ENCODE measurements at regions of chr3 and their contacts with region 1.

Region 1: DNA sequence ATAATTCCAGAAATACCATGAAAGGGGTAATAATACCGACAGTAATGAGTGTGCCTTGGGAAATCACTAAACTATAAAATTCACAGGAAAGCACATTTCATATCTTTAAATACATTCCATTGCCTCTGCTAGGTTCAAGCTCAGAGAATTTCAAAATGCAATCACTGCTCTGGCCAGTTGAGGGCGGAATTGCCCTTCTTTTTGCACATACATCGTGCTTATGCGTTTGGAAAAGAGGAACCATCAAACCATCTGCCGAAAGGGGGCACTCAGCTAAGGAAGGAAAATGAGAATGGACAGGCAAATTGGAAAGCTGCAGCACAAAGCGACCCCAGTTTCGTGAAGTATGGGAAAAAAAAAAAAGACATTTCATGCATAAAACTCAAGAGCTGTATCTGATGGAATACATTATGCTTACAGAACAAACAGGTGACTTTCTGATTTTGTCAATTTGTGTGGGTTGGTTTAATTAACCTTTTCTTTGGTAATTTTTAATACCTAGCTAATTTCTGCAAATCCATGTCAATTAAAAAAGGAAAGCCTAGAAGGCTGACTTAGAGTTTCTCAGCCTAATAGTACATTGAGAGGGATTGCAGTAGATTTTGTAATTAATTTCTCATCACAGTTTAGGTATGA is 61.4 kb downstream of the TUSC7 start:
- DNase-seq: peak in 4 of 5 donors; percentile 18 to 45 (median 30)
- ATAC-seq: peak in 2 of 4 donors; percentile 69 to 76
- H3K4me3 ChIP-seq: no peak overlapping the region
- H3K27ac ChIP-seq: no peak overlapping the region
- H3K4me1 ChIP-seq: no peaks in the 10 kb centered on the region
- H3K27me3 ChIP-seq: peaks cover 0 to 3% (median 0%) of the 10 kb centered on the region in 9 donors
- CTCF ChIP-seq: peak; percentile 52 to 85 (median 72)
- POLR2A ChIP-seq: no peak

Region 2: DNA sequence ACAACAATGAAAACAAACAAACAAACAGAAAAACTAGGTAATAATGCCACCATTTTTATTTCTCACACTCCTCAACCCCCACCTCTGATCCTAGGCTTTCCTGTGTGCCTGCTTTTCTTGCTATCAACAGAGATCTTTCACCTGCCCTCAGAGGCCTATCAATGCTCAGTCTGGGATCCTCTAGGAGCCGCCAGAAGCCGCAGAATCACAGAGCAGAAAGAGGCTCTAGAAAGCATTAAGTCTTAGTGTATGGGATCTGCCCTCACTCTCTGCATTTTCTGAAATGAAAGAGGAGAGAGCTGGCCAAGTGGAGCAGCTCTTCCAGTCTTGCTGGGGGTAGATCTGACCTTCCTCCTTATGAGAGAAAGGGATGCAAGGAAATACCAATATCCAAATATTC is 245.4 kb after region 1 on chr3:
- intact Hi-C with region 1: no loop called
- DNase-seq: no peak
- ATAC-seq: no peak
- H3K4me3 ChIP-seq: no peak overlapping the region
- H3K27ac ChIP-seq: no peak overlapping the region
- H3K4me1 ChIP-seq: no peaks in the 10 kb centered on the region
- H3K27me3 ChIP-seq: peaks cover 0 to 15% (median 0%) of the 10 kb centered on the region in 9 donors
- CTCF ChIP-seq: no peak
- POLR2A ChIP-seq: no peak

Region 3: GRCh38 chr3:117063930-117064329 is 293.0 kb after region 1 on chr3:
- intact Hi-C with region 1: no loop called
- DNase-seq: no peak
- ATAC-seq: peak in 2 of 4 donors; percentile 59 to 75
- H3K4me3 ChIP-seq: no peak overlapping the region
- H3K27ac ChIP-seq: no peak overlapping the region
- H3K4me1 ChIP-seq: peaks cover 0 to 21% (median 0%) of the 10 kb centered on the region in 12 donors
- H3K27me3 ChIP-seq: no peaks in the 10 kb centered on the region
- CTCF ChIP-seq: no peak
- POLR2A ChIP-seq: no peak

Region 4: DNA sequence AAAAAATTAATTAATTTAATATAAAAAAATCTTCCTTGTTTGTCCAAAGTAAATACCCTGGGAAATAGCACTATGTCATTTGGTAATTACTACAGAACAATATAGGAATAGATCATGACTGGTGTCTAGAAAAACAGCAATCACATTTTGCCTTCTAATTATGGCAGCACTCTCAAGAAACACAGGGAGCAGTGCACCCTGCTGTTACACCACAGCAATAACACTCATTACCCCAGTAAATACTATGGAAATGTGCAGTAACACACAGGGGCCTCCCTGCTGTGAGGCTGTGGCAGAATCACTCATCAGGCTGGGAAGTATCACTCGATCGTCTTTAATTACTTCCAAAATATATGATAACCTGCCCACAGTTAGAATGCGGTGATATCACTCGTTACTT is 584.6 kb after region 1 on chr3:
- intact Hi-C with region 1: loop called in 1 of 10 experiments (anchors 5 kb)
- DNase-seq: no peak
- ATAC-seq: no peak
- H3K4me3 ChIP-seq: no peak overlapping the region
- H3K27ac ChIP-seq: no peak overlapping the region
- H3K4me1 ChIP-seq: no peaks in the 10 kb centered on the region
- H3K27me3 ChIP-seq: no peaks in the 10 kb centered on the region
- CTCF ChIP-seq: peak in 8 of 12 donors; percentile 11 to 39 (median 26)
- POLR2A ChIP-seq: no peak

Region 5: GRCh38 chr3:117719316-117719926 is 948.5 kb after region 1 on chr3:
- intact Hi-C with region 1: loop called in 5 of 10 experiments (anchors 2 to 10 kb)
- DNase-seq: no peak
- ATAC-seq: no peak
- H3K4me3 ChIP-seq: no peak overlapping the region
- H3K27ac ChIP-seq: no peak overlapping the region
- H3K4me1 ChIP-seq: no peaks in the 10 kb centered on the region
- H3K27me3 ChIP-seq: peaks cover 0 to 5% (median 0%) of the 10 kb centered on the region in 9 donors
- CTCF ChIP-seq: peak; percentile 39 to 74 (median 64)
- POLR2A ChIP-seq: no peak

Region 6: GRCh38 chr3:117997201-117998049 is 1226.5 kb after region 1 on chr3:
- intact Hi-C with region 1: loop called in 1 of 10 experiments (anchors 5 kb)
- DNase-seq: peak; percentile 49 to 78 (median 54)
- ATAC-seq: peak; percentile 50 to 95 (median 90)
- H3K4me3 ChIP-seq: peak overlapping the region in 11 of 12 donors; percentile 14 to 56 (median 44)
- H3K27ac ChIP-seq: no peak overlapping the region
- H3K4me1 ChIP-seq: peaks cover 0 to 12% (median 5%) of the 10 kb centered on the region in 12 donors
- H3K27me3 ChIP-seq: peaks cover 0 to 47% (median 22%) of the 10 kb centered on the region in 9 donors
- CTCF ChIP-seq: peak; percentile 64 to 85 (median 72)
- POLR2A ChIP-seq: no peak

Measured in heart left ventricle (tissue), 16 donors.